ENCODE measurements at regions of chr19 and their contacts with region 1.

Region 1: GRCh38 chr19:1665565-1666047 is 13.2 kb upstream of the TCF3 start:
- DNase-seq: peak; percentile 35
- ATAC-seq: peak; percentile 9
- H3K4me3 Mint-ChIP-seq: peak overlapping the region; percentile 55
- H3K27ac Mint-ChIP-seq: peak overlapping the region; percentile 79
- H3K4me1 Mint-ChIP-seq: peaks cover 73% of the 10 kb centered on the region
- H3K27me3 Mint-ChIP-seq: no peaks in the 10 kb centered on the region
- CTCF ChIP-seq: no peak

Region 2: GRCh38 chr19:1064661-1065605 is 600.7 kb before region 1 on chr19:
- CTCF ChIA-PET with region 1: no interaction called
- POLR2A ChIA-PET with region 1: no interaction called
- intact Hi-C with region 1: no loop called
- DNase-seq: peak; percentile 68
- ATAC-seq: peak; percentile 36
- H3K4me3 Mint-ChIP-seq: peak overlapping the region; percentile 60
- H3K27ac Mint-ChIP-seq: no peak overlapping the region
- H3K4me1 Mint-ChIP-seq: peaks cover 38% of the 10 kb centered on the region
- H3K27me3 Mint-ChIP-seq: no peaks in the 10 kb centered on the region
- CTCF ChIP-seq: peak; percentile 33

Region 3: GRCh38 chr19:1646659-1647453 is 18.8 kb before region 1 on chr19:
- CTCF ChIA-PET with region 1: interaction called, 10 read pairs
- POLR2A ChIA-PET with region 1: interaction called, 121 read pairs
- intact Hi-C with region 1: loop called (anchors 1 kb)
- DNase-seq: no peak
- ATAC-seq: no peak
- H3K4me3 Mint-ChIP-seq: no peak overlapping the region
- H3K27ac Mint-ChIP-seq: peak overlapping the region; percentile 76
- H3K4me1 Mint-ChIP-seq: peaks cover 50% of the 10 kb centered on the region
- H3K27me3 Mint-ChIP-seq: no peaks in the 10 kb centered on the region
- CTCF ChIP-seq: no peak

Region 4: GRCh38 chr19:1840541-1841115 is 175.0 kb after region 1 on chr19:
- CTCF ChIA-PET with region 1: no interaction called
- POLR2A ChIA-PET with region 1: interaction called, 10 read pairs
- intact Hi-C with region 1: no loop called
- DNase-seq: no peak
- ATAC-seq: no peak
- H3K4me3 Mint-ChIP-seq: no peak overlapping the region
- H3K27ac Mint-ChIP-seq: no peak overlapping the region
- H3K4me1 Mint-ChIP-seq: peaks cover 63% of the 10 kb centered on the region
- H3K27me3 Mint-ChIP-seq: no peaks in the 10 kb centered on the region
- CTCF ChIP-seq: no peak

Region 5: GRCh38 chr19:1855040-1855827 is 189.6 kb after region 1 on chr19:
- CTCF ChIA-PET with region 1: no interaction called
- POLR2A ChIA-PET with region 1: interaction called, 10 read pairs
- intact Hi-C with region 1: no loop called
- DNase-seq: peak; percentile 62
- ATAC-seq: peak; percentile 70
- H3K4me3 Mint-ChIP-seq: peak overlapping the region; percentile 73
- H3K27ac Mint-ChIP-seq: peak overlapping the region; percentile 89
- H3K4me1 Mint-ChIP-seq: peaks cover 73% of the 10 kb centered on the region
- H3K27me3 Mint-ChIP-seq: no peaks in the 10 kb centered on the region
- CTCF ChIP-seq: no peak